MCF 10A (cell line): ENCODE measurements at regions of chr3 and their contacts with region 1.

Region 1: GRCh38 chr3:55169608-55170010 is 241.8 kb upstream of the LRTM1 start:
- DNase-seq: peak; percentile 92
- H3K4me3 Mint-ChIP-seq: peak overlapping the region; percentile 42
- H3K27ac Mint-ChIP-seq: peak overlapping the region; percentile 99
- H3K4me1 Mint-ChIP-seq: peaks cover 47% of the 10 kb centered on the region
- H3K27me3 Mint-ChIP-seq: no peaks in the 10 kb centered on the region
- CTCF ChIP-seq: no peak

Region 2: GRCh38 chr3:54427941-54428871 is 741.4 kb before region 1 on chr3:
- CTCF ChIA-PET with region 1: interaction called, 3 read pairs
- POLR2A ChIA-PET with region 1: no interaction called
- intact Hi-C with region 1: loop called (anchors 5 kb)
- DNase-seq: peak; percentile 62
- H3K4me3 Mint-ChIP-seq: no peak overlapping the region
- H3K27ac Mint-ChIP-seq: no peak overlapping the region
- H3K4me1 Mint-ChIP-seq: no peaks in the 10 kb centered on the region
- H3K27me3 Mint-ChIP-seq: peaks cover 12% of the 10 kb centered on the region
- CTCF ChIP-seq: peak; percentile 78

Region 3: DNA sequence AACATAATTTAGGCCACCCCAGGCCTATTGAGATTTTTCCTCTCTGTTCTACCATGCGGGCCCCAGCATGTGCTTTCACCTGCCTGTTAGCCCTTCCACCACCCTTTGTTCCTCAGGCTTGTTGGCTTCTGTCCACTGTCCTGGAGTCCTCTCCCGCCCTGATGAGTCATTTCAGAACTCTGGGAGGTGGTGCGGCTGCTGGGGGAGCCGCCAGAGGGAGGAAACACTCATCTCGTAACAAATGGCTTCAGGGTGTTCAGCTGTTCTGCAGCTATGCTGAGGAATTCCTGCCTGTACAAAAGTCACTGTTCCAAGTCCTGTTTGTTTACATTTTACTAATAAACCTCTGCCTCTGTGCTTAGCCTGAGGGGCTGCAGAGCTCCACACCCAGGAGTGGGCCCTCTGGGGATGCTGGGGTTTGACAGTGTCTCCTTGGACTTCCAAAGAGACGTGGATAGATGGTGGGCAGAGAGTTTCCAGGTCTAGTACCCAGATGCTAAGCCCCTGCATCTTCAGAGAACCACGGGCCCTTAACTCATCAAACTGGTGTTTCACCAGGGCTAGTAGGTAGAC is 278.0 kb before region 1 on chr3:
- CTCF ChIA-PET with region 1: interaction called, 3 read pairs
- POLR2A ChIA-PET with region 1: interaction called, 5 read pairs
- intact Hi-C with region 1: loop called (anchors 5 kb)
- DNase-seq: peak; percentile 99
- H3K4me3 Mint-ChIP-seq: peak overlapping the region; percentile 51
- H3K27ac Mint-ChIP-seq: peak overlapping the region; percentile 85
- H3K4me1 Mint-ChIP-seq: peaks cover 44% of the 10 kb centered on the region
- H3K27me3 Mint-ChIP-seq: no peaks in the 10 kb centered on the region
- CTCF ChIP-seq: peak; percentile 42

Region 4: GRCh38 chr3:55042591-55042990 is 127.0 kb before region 1 on chr3:
- CTCF ChIA-PET with region 1: no interaction called
- POLR2A ChIA-PET with region 1: no interaction called
- intact Hi-C with region 1: loop called (anchors 5 kb)
- DNase-seq: peak; percentile 26
- H3K4me3 Mint-ChIP-seq: no peak overlapping the region
- H3K27ac Mint-ChIP-seq: no peak overlapping the region
- H3K4me1 Mint-ChIP-seq: no peaks in the 10 kb centered on the region
- H3K27me3 Mint-ChIP-seq: no peaks in the 10 kb centered on the region
- CTCF ChIP-seq: peak; percentile 30

Region 5: DNA sequence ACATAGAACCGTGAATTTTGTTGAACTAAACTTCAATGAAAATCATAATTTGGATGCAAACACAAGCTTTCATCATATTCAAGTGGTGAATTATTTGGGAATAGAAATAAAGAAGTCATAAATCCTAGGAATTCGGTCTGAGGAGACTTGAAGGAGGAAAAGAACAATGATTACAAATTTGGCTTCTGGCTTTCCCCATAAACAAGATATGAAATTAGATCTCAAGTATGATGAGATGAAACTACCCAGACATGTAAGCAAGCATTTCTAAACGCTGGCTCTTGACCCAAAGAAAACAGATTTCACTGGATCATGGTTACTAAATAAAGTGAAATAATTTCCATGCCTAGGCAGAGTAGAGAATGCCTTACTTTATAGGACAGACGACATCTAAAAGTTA is 94.8 kb before region 1 on chr3:
- CTCF ChIA-PET with region 1: no interaction called
- POLR2A ChIA-PET with region 1: no interaction called
- intact Hi-C with region 1: no loop called
- DNase-seq: no peak
- H3K4me3 Mint-ChIP-seq: no peak overlapping the region
- H3K27ac Mint-ChIP-seq: no peak overlapping the region
- H3K4me1 Mint-ChIP-seq: peaks cover 5% of the 10 kb centered on the region
- H3K27me3 Mint-ChIP-seq: no peaks in the 10 kb centered on the region
- CTCF ChIP-seq: no peak

Region 6: GRCh38 chr3:55330355-55330754 is 160.7 kb after region 1 on chr3:
- CTCF ChIA-PET with region 1: no interaction called
- POLR2A ChIA-PET with region 1: no interaction called
- intact Hi-C with region 1: loop called (anchors 5 kb)
- DNase-seq: peak; percentile 92
- H3K4me3 Mint-ChIP-seq: no peak overlapping the region
- H3K27ac Mint-ChIP-seq: peak overlapping the region; percentile 93
- H3K4me1 Mint-ChIP-seq: peaks cover 35% of the 10 kb centered on the region
- H3K27me3 Mint-ChIP-seq: no peaks in the 10 kb centered on the region
- CTCF ChIP-seq: no peak

Region 7: DNA sequence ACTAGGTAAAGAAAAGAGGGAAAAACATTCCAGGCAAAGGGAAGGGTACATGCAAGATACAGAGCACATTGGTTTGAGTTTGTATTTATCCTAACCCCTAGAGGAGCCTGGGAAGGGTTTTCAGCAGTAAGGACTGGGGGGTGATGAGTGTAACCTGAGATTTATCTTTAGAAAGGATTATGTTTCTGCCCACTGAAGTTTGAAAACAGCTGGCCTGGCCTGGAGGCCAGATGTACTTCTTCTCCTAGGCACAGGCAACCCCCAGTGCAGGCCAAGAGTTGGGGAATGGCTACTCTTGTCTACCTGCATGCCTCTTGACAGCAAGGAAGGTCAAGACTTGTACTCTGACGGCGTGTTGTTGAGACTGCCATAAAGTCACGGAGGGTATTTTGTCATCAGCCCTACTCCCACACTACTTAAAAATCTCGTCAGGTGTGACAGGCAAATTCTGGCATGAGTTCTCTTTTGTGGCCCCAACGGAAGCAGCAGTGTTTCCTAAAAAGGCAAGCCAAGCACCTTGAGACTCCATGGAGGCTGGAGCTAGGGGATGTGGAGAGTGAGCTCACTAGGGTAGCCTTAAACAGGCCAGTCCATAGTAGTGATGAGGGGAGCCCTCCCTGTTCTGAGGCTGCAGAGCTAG is 559.0 kb after region 1 on chr3:
- CTCF ChIA-PET with region 1: no interaction called
- POLR2A ChIA-PET with region 1: no interaction called
- intact Hi-C with region 1: no loop called
- DNase-seq: no peak
- H3K4me3 Mint-ChIP-seq: no peak overlapping the region
- H3K27ac Mint-ChIP-seq: no peak overlapping the region
- H3K4me1 Mint-ChIP-seq: no peaks in the 10 kb centered on the region
- H3K27me3 Mint-ChIP-seq: peaks cover 11% of the 10 kb centered on the region
- CTCF ChIP-seq: no peak